Mammary epithelial cell (primary cell): ENCODE measurements at regions of chr1 and their contacts with region 1.

Region 1: DNA sequence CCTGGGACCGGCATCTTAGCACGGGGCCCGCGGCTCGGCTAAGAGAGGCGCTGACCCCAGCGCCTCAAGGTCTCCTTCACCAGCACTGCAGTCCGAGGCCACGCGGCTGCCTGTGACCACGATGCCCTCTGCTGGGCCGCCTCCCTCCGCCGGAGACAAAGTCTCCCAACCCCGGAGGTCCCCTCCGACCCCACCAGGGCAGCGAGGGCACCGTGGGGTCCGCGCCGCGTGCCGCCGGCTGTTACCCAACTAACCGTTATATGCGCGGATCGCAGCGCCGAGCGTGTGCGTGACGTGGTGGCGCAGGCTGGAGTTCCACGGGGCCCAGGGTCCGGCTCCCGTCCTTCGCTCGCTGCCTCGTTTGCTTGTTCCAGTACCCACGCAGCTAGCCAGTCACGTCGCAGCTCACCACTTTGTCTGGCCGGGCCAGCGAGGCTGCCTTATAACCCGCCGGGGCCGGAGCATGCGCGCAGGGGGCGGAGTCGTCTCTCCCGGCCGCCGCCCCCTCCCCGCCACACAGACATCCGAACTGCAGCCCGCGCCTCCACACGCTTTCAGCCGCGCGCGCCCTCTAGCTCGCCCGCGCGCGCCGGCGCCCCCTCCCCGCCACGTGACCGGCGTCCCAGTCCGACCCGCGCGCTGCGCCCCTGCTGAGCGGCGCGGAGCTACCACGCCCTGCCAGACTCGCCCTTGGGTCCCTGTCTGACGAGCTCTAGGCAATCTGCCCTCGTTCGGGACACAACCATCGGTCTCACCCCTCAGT is at the start of gene SLC16A1:
- DNase-seq: peak; percentile 90
- H3K4me3 ChIP-seq: peak within 1 kb of the TSS; percentile 83 to 96 (median 93)
- H3K27ac ChIP-seq: peak within 1 kb of the TSS; percentile 78
- H3K4me1 ChIP-seq: peaks cover 22% of the 10 kb centered on the region
- H3K27me3 ChIP-seq: no peaks in the 10 kb centered on the region
- CTCF ChIP-seq: peak in 1 of 2 donors; percentile 30
- total RNA-seq, gene SLC16A1: 167 to 239 TPM

Region 2: GRCh38 chr1:112809253-112809684 is 146.7 kb before region 1 on chr1:
- CTCF ChIA-PET with region 1: no interaction called
- dilution Hi-C with region 1: no loop called
- in situ Hi-C with region 1: no loop called
- intact Hi-C with region 1: loop called (anchors 1 kb)
- DNase-seq: peak; percentile 62
- H3K4me3 ChIP-seq: no peak overlapping the region
- H3K27ac ChIP-seq: no peak overlapping the region
- H3K4me1 ChIP-seq: peaks cover 9% of the 10 kb centered on the region
- H3K27me3 ChIP-seq: no peaks in the 10 kb centered on the region
- CTCF ChIP-seq: peak; percentile 95 to 96

Region 3: DNA sequence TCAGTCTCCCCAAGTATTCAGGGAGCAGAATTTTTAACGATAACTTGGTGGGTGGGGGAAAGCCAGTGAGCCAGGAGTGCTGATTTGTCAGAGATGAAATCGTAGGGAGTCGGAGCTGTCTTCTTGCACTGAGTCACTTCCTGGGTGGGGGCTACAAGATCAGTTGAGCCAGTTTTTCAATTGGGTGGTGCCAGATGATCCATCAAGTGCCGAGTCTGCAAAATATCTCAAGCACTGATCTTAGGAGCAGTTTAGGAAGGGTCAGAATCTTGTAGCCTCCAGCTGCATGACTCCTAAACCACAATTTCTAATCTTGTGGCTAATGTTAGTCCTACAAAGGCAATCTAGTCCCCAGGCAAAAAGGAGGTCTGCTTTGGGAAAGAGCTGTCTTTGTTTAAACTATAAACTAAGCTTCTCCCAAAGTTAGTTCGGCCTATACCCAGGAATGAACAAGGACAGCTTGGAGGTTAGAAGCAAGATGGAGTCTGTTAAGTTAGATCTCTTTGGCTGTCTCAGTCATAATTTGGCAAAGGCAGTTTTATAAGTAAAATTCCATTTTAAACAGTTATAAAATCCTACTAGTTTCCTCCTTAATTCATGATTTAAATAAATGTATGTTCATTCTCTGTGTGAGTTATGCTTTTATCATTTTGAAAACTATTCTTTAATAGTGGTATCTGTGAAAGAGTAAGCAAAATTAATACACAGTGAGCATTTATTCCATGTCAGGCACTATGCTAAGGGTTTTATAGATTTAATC is 51.7 kb before region 1 on chr1:
- CTCF ChIA-PET with region 1: no interaction called
- dilution Hi-C with region 1: no loop called
- in situ Hi-C with region 1: no loop called
- intact Hi-C with region 1: loop called (anchors 1 kb)
- DNase-seq: peak; percentile 98
- H3K4me3 ChIP-seq: no peak overlapping the region
- H3K27ac ChIP-seq: peak overlapping the region; percentile 81
- H3K4me1 ChIP-seq: peaks cover 51% of the 10 kb centered on the region
- H3K27me3 ChIP-seq: no peaks in the 10 kb centered on the region
- CTCF ChIP-seq: no peak

Region 4: DNA sequence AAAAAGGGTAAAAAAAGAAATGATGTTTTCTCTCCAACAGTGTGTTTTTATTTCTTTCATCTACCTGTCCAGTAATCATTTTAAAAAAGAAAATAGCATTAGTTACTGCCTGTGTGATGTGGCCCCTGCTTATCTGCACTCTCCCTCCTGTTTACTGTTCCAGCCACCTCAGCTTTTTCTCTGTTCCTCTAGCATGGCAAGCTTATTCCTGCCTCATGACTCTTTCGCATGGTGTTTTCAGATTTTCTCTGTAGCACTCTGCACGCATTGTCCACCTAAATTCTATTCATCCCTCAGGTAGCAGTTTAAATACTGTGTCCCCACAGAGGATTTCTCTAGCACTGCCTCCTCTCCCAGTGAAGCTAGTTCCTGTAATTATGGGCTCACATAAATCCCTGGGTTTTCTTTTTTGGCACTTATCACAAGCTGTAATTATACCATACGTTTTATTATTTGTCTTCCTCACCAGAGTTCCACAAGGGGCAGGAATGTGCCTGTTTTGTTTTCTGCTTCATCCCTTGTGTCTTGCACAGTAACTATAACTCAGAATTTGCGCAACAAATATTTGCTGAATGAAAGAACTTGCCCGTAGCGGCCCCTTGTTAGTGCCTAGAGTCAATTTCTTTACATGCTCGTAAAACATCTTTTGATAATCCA is 65.6 kb after region 1 on chr1:
- CTCF ChIA-PET with region 1: no interaction called
- dilution Hi-C with region 1: no loop called
- in situ Hi-C with region 1: no loop called
- intact Hi-C with region 1: loop called (anchors 5 kb)
- DNase-seq: peak; percentile 74
- H3K4me3 ChIP-seq: no peak overlapping the region
- H3K27ac ChIP-seq: peak overlapping the region; percentile 45
- H3K4me1 ChIP-seq: peaks cover 12% of the 10 kb centered on the region
- H3K27me3 ChIP-seq: no peaks in the 10 kb centered on the region
- CTCF ChIP-seq: peak in 1 of 2 donors; percentile 35

Region 5: GRCh38 chr1:113072757-113073478 is 117.0 kb after region 1 on chr1 and contains the start of gene LRIG2:
- CTCF ChIA-PET with region 1: interaction called, 6 read pairs
- dilution Hi-C with region 1: no loop called
- in situ Hi-C with region 1: no loop called
- intact Hi-C with region 1: loop called (anchors 2 kb)
- DNase-seq: peak; percentile 99
- H3K4me3 ChIP-seq: peak within 1 kb of the TSS; percentile 65 to 92 (median 86)
- H3K27ac ChIP-seq: peak within 1 kb of the TSS; percentile 75
- H3K4me1 ChIP-seq: peaks cover 11% of the 10 kb centered on the region
- H3K27me3 ChIP-seq: no peaks in the 10 kb centered on the region
- CTCF ChIP-seq: peak; percentile 57 to 66
- total RNA-seq, gene LRIG2: 11.6 to 17.3 TPM